RWPE1 (cell line): ENCODE measurements at regions of chr7 and their contacts with region 1.

Region 1: DNA sequence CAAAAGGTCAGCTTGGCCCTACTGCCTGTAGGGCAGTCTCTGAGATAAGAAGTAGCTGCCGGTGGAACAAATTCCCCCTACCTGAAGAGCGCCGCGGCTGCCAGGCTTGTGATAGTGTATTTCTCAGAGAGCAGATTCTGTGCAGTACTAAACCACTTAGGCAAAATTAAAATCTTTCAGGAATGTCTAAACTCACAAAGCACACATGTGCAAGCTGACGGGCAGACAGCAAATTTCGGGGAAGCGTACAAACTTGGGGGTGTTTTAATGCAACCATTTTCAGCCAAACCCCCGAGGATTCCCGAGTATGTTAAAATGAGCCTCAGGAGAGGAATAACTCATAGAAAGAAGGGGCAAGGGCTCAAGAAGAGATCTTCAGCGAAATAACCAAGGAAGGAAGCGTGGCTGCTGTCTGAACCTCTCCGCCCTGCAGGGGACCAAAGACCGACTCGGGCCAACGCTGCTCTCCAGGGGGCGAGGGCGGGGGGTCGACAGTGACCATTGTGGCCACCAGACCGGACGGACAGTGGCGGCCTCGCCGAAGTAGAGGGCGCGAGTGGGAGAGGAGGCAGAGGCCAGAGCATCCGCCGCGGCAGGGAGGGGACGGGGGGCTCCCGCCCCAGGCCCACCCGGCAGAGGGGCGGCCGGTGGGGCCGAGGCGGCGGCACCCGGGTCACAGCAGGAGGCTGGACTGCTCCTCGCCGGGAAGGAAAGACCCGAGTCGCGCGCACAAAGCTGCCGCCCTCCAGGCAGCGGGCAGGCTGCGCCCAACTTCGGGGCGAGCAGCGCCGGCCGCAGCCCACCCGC is 819 bp downstream of the HYCC1 start:
- DNase-seq: no peak
- H3K27ac ChIP-seq: peak overlapping the region; percentile 84
- CTCF ChIP-seq: peak; percentile 33

Region 2: GRCh38 chr7:22771194-22771871 is 241.8 kb before region 1 on chr7:
- CTCF ChIA-PET with region 1: no interaction called
- POLR2A ChIA-PET with region 1: no interaction called
- DNase-seq: no peak
- H3K27ac ChIP-seq: no peak overlapping the region
- CTCF ChIP-seq: no peak

Region 3: DNA sequence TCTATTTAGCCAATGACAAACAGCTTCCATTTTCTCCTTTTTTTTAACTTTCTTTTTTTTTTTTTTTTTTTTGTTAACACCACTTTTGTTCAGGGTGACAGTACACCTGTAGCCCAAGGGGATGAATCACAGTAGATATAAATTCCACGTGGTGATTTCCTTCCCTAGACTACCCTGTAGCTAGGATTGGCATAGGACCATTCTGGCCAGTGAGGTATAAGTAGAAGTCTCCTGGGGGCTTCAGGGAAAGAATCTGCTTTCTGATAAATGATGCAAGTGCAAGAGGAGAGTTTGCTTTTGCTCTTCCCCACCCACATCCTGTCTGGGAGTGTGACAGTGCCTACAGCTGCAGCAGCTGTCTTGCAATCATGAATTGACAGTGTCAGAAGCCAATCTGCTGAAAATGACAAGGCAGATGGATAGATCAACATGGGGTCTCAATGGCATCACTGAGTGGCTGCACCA is 127.3 kb before region 1 on chr7:
- CTCF ChIA-PET with region 1: interaction called, 10 read pairs
- POLR2A ChIA-PET with region 1: no interaction called
- DNase-seq: no peak
- H3K27ac ChIP-seq: no peak overlapping the region
- CTCF ChIP-seq: no peak

Region 4: DNA sequence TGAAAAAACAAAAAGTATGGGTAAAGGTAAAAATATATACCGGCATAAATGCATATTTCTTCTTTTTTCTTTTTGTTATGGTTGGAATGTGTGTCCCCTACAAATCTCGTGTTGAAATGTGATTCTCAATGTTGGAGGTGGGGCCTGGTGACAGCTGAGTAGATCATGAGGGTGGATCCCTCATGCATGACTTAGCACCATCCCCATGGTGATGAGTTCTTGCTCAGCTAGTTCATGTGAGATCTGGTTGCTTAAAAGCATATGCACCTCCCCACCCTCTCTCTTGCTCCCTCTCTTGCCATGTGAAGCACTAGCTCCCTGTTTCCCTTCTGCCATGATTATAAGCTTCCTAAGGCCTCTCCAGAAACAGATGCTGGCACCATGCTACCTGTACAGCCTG is 92.4 kb before region 1 on chr7:
- CTCF ChIA-PET with region 1: no interaction called
- POLR2A ChIA-PET with region 1: no interaction called
- DNase-seq: no peak
- H3K27ac ChIP-seq: no peak overlapping the region
- CTCF ChIP-seq: no peak